Activated B cell treated with CpG ODN at 0.5 μM for 24 hours (primary cell): ENCODE measurements at regions of chr5 and their contacts with region 1.

Region 1: GRCh38 chr5:149731639-149732323 is 1.7 kb downstream of the PPARGC1B start:
- DNase-seq: peak; percentile 50
- ATAC-seq: peak; percentile 58
- H3K4me3 Mint-ChIP-seq: peak overlapping the region; percentile 88
- H3K27ac Mint-ChIP-seq: peak overlapping the region; percentile 75
- H3K4me1 Mint-ChIP-seq: peaks cover 12% of the 10 kb centered on the region
- H3K27me3 Mint-ChIP-seq: no peaks in the 10 kb centered on the region
- CTCF ChIP-seq: no peak

Region 2: DNA sequence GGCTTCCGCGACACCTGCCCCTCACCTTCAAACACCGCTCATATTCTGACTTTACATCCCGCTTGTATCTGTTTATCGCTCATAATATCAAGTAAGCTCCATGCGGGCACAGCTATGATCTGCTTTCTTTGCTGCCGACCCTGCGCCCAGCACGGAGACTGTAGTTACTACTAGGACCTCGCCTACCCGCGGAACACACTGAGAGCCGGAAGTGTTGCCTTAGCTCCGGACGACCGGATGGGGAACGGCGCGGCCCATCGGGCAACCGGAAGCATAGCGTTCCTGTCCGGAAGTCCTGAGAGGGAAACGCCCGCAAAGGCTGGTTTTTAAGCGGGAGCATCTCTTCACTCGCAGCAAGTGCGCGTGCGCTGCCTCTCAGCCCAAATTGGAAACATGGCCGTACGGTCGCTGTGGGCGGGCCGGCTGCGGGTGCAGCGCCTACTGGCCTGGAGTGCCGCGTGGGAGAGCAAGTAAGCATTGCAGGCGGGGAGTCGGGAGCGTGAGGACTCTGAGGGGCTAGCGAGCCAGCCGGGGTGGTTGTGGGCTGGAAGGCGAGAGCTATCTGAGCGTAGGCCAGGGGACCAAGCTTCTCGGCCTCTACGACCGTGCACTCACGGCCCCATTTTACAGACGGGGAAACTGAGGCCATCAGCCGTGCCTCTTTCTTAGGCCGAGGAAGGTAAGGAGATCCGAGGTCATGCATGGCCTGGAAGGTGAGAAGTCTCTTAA is 386.5 kb before region 1 on chr5 and contains the start of gene GRPEL2:
- CTCF ChIA-PET with region 1: no interaction called
- POLR2A ChIA-PET with region 1: no interaction called
- intact Hi-C with region 1: loop called (anchors 5 kb)
- DNase-seq: peak; percentile 79
- ATAC-seq: peak; percentile 91
- H3K4me3 Mint-ChIP-seq: peak within 1 kb of the TSS; percentile 97
- H3K27ac Mint-ChIP-seq: peak within 1 kb of the TSS; percentile 97
- H3K4me1 Mint-ChIP-seq: peaks cover 34% of the 10 kb centered on the region
- H3K27me3 Mint-ChIP-seq: no peaks in the 10 kb centered on the region
- CTCF ChIP-seq: no peak
- total RNA-seq, gene GRPEL2: 13.2 and 14.0 TPM in 2 replicates

Region 3: GRCh38 chr5:149583394-149583793 is 148.4 kb before region 1 on chr5:
- CTCF ChIA-PET with region 1: no interaction called
- POLR2A ChIA-PET with region 1: no interaction called
- intact Hi-C with region 1: no loop called
- DNase-seq: no peak
- ATAC-seq: no peak
- H3K4me3 Mint-ChIP-seq: no peak overlapping the region
- H3K27ac Mint-ChIP-seq: no peak overlapping the region
- H3K4me1 Mint-ChIP-seq: peaks cover 8% of the 10 kb centered on the region
- H3K27me3 Mint-ChIP-seq: peaks cover 16% of the 10 kb centered on the region
- CTCF ChIP-seq: no peak

Region 4: GRCh38 chr5:149656576-149657182 is 75.1 kb before region 1 on chr5:
- CTCF ChIA-PET with region 1: no interaction called
- POLR2A ChIA-PET with region 1: no interaction called
- intact Hi-C with region 1: no loop called
- DNase-seq: no peak
- ATAC-seq: peak; percentile 47
- H3K4me3 Mint-ChIP-seq: no peak overlapping the region
- H3K27ac Mint-ChIP-seq: no peak overlapping the region
- H3K4me1 Mint-ChIP-seq: no peaks in the 10 kb centered on the region
- H3K27me3 Mint-ChIP-seq: peaks cover 14% of the 10 kb centered on the region
- CTCF ChIP-seq: no peak

Region 5: GRCh38 chr5:149667084-149667828 is 64.5 kb before region 1 on chr5:
- CTCF ChIA-PET with region 1: interaction called, 9 read pairs
- POLR2A ChIA-PET with region 1: interaction called, 3 read pairs
- intact Hi-C with region 1: loop called (anchors 1 kb)
- DNase-seq: no peak
- ATAC-seq: peak; percentile 50
- H3K4me3 Mint-ChIP-seq: no peak overlapping the region
- H3K27ac Mint-ChIP-seq: no peak overlapping the region
- H3K4me1 Mint-ChIP-seq: peaks cover 5% of the 10 kb centered on the region
- H3K27me3 Mint-ChIP-seq: no peaks in the 10 kb centered on the region
- CTCF ChIP-seq: peak; percentile 94

Region 6: DNA sequence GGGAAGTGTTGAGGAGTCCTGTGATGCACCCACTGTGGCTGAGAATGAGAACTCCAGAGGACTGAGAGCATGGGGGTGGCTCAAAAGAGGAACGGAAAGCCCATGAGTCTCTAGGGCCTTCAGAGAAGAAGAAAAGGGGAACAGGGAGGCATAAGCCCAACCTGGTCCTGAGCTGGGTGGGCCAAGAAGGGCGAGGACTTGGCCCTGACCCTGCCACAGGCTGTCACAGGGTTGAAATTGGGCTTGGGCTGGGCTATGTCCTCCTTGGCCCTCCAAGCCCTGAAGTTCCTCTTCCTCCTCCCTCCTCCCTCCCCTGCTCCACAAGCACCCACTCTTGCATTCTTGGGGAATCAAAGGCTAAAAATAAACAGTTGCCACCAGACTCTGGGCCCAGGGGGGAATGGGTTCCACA is 51.0 kb before region 1 on chr5:
- CTCF ChIA-PET with region 1: interaction called, 3 read pairs
- POLR2A ChIA-PET with region 1: interaction called, 4 read pairs
- intact Hi-C with region 1: loop called (anchors 1 kb)
- DNase-seq: peak; percentile 46
- ATAC-seq: peak; percentile 97
- H3K4me3 Mint-ChIP-seq: peak overlapping the region; percentile 28
- H3K27ac Mint-ChIP-seq: peak overlapping the region; percentile 80
- H3K4me1 Mint-ChIP-seq: peaks cover 55% of the 10 kb centered on the region
- H3K27me3 Mint-ChIP-seq: no peaks in the 10 kb centered on the region
- CTCF ChIP-seq: no peak

Region 7: DNA sequence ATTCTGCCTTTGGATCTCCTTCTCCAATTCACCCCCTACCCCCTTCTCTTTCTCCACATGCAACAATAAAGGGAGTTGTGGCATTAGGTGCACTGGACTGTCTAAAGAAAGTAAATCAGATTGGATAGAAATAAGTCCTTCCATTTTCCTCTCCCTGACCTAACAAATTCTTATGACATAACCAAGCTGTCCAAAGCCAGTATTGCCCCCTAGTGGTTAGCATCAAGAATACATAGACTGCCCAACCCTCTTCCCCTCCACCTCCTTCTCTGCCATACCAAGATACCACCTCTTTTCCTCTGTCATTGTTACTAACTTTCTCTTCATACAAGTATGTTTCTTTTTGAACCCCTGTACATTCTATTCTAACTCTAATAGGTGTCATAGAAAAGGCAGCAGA is 44.0 kb after region 1 on chr5:
- CTCF ChIA-PET with region 1: interaction called, 4 read pairs
- POLR2A ChIA-PET with region 1: interaction called, 8 read pairs
- intact Hi-C with region 1: loop called (anchors 1 kb)
- DNase-seq: no peak
- ATAC-seq: peak; percentile 29
- H3K4me3 Mint-ChIP-seq: no peak overlapping the region
- H3K27ac Mint-ChIP-seq: no peak overlapping the region
- H3K4me1 Mint-ChIP-seq: peaks cover 52% of the 10 kb centered on the region
- H3K27me3 Mint-ChIP-seq: no peaks in the 10 kb centered on the region
- CTCF ChIP-seq: no peak

Region 8: DNA sequence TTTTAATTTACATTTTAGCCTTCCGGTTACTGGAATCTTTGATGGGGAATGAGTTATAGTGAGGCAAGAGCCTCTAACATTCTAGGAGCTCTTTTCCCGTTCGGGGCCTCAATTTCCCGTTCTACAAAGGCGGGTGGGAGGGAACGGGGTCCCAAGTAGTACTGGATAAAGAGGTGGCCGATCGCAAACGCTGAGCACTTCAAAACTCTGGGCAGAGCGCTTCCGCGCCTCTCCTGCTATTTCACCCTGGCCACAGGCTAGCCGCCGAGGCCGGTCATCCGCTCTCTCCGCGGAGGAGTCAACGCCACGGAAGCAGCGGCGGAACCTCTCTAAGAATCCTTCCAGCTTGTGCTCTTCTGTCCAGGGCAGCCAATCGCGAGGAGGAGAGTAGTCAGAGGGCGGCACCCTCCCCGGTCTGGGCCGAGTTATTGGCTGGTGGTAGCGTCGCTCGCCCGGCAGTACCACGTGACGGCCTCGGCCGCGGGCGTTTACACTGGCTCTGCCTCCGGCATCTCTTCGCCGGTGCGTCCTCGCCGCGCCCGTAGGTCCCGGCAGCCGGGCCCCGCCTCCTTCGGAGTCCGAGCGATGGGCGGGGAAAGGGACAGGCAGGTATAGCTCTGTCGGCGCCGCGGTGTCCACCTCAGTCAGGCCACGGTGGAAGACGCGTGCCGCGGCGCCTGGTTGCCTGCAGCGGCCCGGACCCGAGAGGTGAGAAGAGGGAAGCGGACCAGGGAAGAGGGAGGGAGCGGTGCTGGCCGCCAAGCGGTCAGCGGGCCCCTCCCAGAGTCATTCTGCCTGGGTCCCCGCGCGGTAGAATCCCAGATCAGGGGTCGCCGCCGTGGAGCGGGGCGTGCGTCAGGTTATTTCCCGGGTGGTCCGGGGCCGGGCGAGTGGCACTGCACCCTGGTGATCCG is 228.7 kb after region 1 on chr5 and contains the start of gene SLC26A2:
- CTCF ChIA-PET with region 1: no interaction called
- POLR2A ChIA-PET with region 1: interaction called, 9 read pairs
- intact Hi-C with region 1: loop called (anchors 1 kb)
- DNase-seq: peak; percentile 88
- ATAC-seq: peak; percentile 97
- H3K4me3 Mint-ChIP-seq: peak within 1 kb of the TSS; percentile 98
- H3K27ac Mint-ChIP-seq: peak within 1 kb of the TSS; percentile 98
- H3K4me1 Mint-ChIP-seq: peaks cover 20% of the 10 kb centered on the region
- H3K27me3 Mint-ChIP-seq: no peaks in the 10 kb centered on the region
- CTCF ChIP-seq: no peak
- total RNA-seq, gene SLC26A2: 8.9 and 11.0 TPM in 2 replicates